Activated T-helper 2 cell treated with anti-CD3 and anti-CD28 coated beads, Interferon-gamma antibody, Interleukin-2, Interleukin-4, amounts not matched to agents 10 μg/mL and 5 μg/mL and 100 μg/mL, durations not matched to agents 14 hours and 24 hours and 36 hours (primary cell): ENCODE measurements at regions of chr17 and their contacts with region 1.

Region 1: GRCh38 chr17:48505787-48506645 is 24.8 kb downstream of the HOXB1 start:
- DNase-seq: peak; percentile 60
- H3K4me3 Mint-ChIP-seq: no peak overlapping the region
- H3K27ac Mint-ChIP-seq: peak overlapping the region; percentile 63
- H3K4me1 Mint-ChIP-seq: peaks cover 33% of the 10 kb centered on the region
- H3K27me3 Mint-ChIP-seq: peaks cover 18% of the 10 kb centered on the region

Region 2: DNA sequence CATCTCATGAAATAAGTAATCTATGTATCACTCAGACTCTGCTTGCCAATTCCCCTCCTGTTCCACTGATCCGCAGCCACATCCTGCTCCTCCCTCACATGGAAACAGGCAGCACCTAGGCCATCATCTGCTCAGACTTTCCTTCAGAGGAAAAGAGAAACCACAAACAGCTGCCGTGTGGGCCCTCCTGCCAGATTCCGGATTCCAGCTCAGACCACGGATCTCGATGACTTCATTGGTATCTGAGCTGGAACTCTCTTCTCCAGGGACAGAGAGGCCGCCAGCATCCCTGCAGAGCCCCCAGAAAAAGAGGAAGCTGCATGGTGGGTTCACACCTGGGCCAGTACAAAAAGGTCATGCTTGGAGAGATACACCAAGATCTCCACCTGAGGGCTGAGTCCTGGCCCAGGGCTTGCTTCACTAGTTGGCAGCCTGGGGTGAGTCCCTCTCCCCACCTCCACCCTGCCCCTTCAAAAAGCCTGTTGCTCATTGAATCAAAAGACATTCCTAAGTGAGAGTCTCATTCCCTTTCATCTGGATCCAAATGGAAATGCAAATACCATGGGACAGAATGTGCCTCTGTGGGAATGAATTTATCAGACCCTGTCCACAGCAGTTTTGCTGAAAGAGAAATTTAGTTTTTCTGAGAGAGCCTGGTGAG is 22.4 kb before region 1 on chr17:
- intact Hi-C with region 1: loop called (anchors 2 kb)
- DNase-seq: peak; percentile 33
- H3K4me3 Mint-ChIP-seq: no peak overlapping the region
- H3K27ac Mint-ChIP-seq: peak overlapping the region; percentile 18
- H3K4me1 Mint-ChIP-seq: peaks cover 40% of the 10 kb centered on the region
- H3K27me3 Mint-ChIP-seq: no peaks in the 10 kb centered on the region